H1 (cell line): ENCODE measurements at regions of chr11 and their contacts with region 1.

Region 1: DNA sequence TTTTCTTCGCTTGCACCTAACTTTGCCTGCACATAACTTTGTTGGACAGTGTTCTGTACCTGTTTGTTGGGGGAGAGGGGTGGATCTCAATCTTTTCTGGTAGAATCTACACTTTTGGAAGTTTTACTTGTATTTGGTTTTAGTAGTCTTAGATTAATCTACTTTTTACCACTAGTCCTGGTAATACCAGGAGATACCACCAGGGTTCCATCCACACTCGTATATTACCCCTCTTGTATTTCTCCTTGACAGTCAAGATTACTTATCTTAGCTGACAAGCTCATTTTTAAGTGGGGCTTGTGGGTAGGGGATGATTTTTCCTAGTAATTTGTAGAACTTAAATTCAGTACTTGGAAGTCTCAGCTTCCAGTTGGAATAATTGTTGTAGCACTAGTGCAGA is 37.3 kb upstream of the TECTA start:
- DNase-seq: no peak
- H3K4me3 ChIP-seq: no peak overlapping the region
- H3K27ac ChIP-seq: no peak overlapping the region
- H3K4me1 ChIP-seq: no peaks in the 10 kb centered on the region
- H3K27me3 ChIP-seq: no peaks in the 10 kb centered on the region
- CTCF ChIP-seq: peak in 2 of 3 experiments; percentile 37 to 40; a peak in 2 of 4 replicates
- EP300 ChIP-seq: no peak
- POLR2A ChIP-seq: no peak
- RAD21 ChIP-seq: peak; percentile 47

Region 2: DNA sequence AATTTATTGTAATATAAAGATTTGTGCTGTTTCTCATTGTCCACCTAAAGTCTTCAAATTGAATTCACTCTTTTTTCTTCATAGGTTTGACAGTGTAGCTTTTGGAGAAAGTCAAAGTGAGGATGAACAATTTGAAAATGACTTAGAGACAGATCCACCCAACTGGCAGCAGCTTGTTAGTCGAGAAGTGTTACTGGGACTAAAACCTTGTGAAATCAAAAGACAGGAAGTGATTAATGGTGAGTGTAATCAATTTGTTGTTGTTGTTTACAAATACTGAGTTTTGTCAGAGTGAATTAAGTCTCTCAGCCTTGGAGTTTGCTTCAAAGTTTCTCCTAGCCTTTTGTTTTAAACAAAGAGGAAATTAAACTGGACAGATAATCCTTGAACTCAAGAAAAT is 605.7 kb before region 1 on chr11:
- CTCF ChIA-PET with region 1: no interaction called
- POLR2A ChIA-PET with region 1: no interaction called
- DNase-seq: no peak
- H3K4me3 ChIP-seq: no peak overlapping the region
- H3K27ac ChIP-seq: no peak overlapping the region
- H3K4me1 ChIP-seq: no peaks in the 10 kb centered on the region
- H3K27me3 ChIP-seq: no peaks in the 10 kb centered on the region
- CTCF ChIP-seq: no peak
- EP300 ChIP-seq: no peak
- POLR2A ChIP-seq: no peak
- RAD21 ChIP-seq: no peak

Region 3: GRCh38 chr11:121035169-121035755 is 28.5 kb before region 1 on chr11:
- CTCF ChIA-PET with region 1: interaction called, 18 read pairs
- POLR2A ChIA-PET with region 1: no interaction called
- DNase-seq: no peak
- H3K4me3 ChIP-seq: no peak overlapping the region
- H3K27ac ChIP-seq: no peak overlapping the region
- H3K4me1 ChIP-seq: peaks cover 0 to 7% (median 5%) of the 10 kb centered on the region in 4 experiments; a peak in 6 of 7 replicates
- H3K27me3 ChIP-seq: no peaks in the 10 kb centered on the region
- CTCF ChIP-seq: no peak
- EP300 ChIP-seq: no peak
- POLR2A ChIP-seq: no peak
- RAD21 ChIP-seq: no peak

Region 4: DNA sequence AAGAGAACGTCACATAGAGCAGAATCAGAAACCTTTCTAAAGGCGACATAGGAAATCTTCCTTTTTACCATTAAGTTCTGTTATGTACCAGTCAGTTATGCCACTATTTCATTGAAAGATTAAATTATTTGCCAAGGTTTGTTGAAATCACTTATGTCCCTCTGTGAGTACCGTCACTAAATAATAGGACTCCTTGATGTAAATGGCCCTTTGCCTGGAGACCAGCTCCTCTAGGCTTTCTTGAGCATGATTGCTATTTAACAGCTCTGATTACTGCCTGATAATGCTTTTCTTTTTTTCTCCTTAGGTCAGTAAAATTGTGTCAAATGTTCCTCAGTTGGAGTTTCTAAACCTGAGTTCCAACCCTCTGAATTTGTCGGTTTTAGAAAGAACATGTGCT is 10.5 kb before region 1 on chr11:
- CTCF ChIA-PET with region 1: interaction called, 20 read pairs
- POLR2A ChIA-PET with region 1: no interaction called
- DNase-seq: no peak
- H3K4me3 ChIP-seq: no peak overlapping the region
- H3K27ac ChIP-seq: no peak overlapping the region
- H3K4me1 ChIP-seq: no peaks in the 10 kb centered on the region
- H3K27me3 ChIP-seq: no peaks in the 10 kb centered on the region
- CTCF ChIP-seq: no peak
- EP300 ChIP-seq: no peak
- POLR2A ChIP-seq: no peak
- RAD21 ChIP-seq: no peak

Region 5: DNA sequence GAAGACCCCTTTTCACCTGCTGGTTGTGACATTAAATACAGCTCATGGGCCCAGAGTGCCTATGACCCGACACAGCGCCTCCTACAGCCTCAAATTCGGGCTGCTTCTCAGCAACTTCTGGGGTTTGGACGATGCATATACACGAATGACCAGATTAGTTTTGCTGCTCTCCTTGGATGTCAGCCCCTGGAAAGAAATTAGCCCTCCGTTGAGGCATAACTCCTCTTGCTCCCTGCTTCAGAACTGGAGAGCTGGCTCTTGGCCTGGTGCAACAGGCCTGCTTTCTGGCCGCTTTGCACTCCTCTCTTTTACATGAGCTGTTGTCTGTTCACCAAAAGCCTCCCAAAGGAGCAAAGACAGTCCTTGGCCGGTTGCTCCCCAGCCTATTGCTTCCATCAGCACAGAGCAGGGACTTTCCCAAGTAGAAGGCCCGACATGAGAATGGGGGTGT is 40.6 kb after region 1 on chr11:
- CTCF ChIA-PET with region 1: interaction called, 30 read pairs
- POLR2A ChIA-PET with region 1: no interaction called
- DNase-seq: peak in 1 of 2 experiments; percentile 67
- H3K4me3 ChIP-seq: no peak overlapping the region
- H3K27ac ChIP-seq: no peak overlapping the region
- H3K4me1 ChIP-seq: peaks cover 0 to 3% (median 1%) of the 10 kb centered on the region in 4 experiments; a peak in 3 of 7 replicates
- H3K27me3 ChIP-seq: no peaks in the 10 kb centered on the region
- CTCF ChIP-seq: peak; percentile 76 to 94 (median 81)
- EP300 ChIP-seq: no peak
- POLR2A ChIP-seq: no peak
- RAD21 ChIP-seq: peak; percentile 27 to 59

Region 6: DNA sequence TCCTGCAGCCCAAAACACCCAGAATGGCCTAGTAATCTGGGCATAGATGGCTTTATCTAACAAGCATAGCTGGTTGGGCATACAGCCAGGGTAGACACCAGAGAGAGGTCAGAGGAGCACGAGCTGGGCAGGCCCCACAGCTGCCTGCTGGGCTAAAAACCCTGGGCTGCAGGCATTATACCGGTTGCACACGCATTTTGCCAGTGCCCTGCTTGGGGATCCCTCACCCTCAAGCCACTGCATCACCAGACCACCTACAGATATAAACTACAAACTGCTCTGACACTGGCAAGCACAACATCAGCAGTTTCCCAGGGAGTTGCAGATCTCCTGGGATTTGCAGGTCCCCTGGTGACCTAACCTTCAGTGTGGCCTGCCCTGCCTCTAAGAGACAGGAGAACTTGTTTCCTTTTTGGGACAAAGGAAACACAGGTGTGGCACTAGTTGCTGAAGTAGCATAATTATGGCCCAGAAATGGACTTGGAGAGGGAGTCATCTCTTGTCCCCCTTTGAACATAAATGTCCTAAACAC is 149.7 kb after region 1 on chr11:
- CTCF ChIA-PET with region 1: no interaction called
- POLR2A ChIA-PET with region 1: no interaction called
- DNase-seq: peak in 1 of 2 experiments; percentile 16
- H3K4me3 ChIP-seq: no peak overlapping the region
- H3K27ac ChIP-seq: no peak overlapping the region
- H3K4me1 ChIP-seq: no peaks in the 10 kb centered on the region
- H3K27me3 ChIP-seq: no peaks in the 10 kb centered on the region
- CTCF ChIP-seq: no peak
- EP300 ChIP-seq: no peak
- POLR2A ChIP-seq: no peak
- RAD21 ChIP-seq: no peak